ENCODE measurements at regions of chr7 and their contacts with region 1.

Region 1: DNA sequence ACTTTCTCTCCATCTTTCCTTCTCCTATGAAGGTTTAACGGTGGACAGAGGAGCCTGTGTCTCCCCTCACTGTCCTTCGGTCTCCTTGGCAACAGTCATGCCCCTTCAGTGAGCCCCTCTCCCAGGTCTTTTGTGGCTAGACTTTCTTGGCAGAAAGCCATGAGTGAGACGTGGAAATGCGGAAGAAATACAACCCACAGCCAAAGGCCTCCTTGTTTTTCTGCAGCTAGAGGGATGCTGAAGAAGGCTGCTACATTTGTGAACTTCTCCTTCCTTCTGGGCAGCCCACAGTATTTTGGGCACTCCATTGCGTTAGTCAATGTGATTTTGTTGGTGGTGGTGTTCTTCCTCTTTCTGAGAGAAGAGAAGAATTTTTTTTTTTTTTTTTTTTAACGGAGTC is 333.7 kb upstream of the PODXL start:
- DNase-seq: no peak
- H3K27ac ChIP-seq: no peak overlapping the region
- CTCF ChIP-seq: no peak

Region 2: DNA sequence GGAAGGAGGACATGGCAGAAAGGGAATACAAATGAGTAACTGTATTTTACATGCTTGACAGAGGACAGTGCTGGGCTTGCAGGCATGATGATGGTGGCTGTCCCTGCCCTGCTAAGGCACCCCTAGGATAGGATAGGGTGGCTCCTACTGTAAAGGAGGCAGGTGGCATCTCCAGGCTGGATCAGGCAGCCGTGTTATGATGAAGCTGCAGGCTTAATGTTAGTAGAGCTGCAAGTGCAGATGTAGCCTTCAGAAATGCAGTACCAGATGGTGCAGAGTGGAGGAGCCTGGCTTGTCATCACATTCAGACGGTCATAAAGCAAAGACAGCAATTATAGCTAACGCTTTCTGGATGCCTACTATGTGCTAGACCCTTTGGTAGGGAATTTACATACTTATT is 45.8 kb before region 1 on chr7:
- CTCF ChIA-PET with region 1: no interaction called
- POLR2A ChIA-PET with region 1: no interaction called
- DNase-seq: no peak
- H3K27ac ChIP-seq: no peak overlapping the region
- CTCF ChIP-seq: no peak

Region 3: DNA sequence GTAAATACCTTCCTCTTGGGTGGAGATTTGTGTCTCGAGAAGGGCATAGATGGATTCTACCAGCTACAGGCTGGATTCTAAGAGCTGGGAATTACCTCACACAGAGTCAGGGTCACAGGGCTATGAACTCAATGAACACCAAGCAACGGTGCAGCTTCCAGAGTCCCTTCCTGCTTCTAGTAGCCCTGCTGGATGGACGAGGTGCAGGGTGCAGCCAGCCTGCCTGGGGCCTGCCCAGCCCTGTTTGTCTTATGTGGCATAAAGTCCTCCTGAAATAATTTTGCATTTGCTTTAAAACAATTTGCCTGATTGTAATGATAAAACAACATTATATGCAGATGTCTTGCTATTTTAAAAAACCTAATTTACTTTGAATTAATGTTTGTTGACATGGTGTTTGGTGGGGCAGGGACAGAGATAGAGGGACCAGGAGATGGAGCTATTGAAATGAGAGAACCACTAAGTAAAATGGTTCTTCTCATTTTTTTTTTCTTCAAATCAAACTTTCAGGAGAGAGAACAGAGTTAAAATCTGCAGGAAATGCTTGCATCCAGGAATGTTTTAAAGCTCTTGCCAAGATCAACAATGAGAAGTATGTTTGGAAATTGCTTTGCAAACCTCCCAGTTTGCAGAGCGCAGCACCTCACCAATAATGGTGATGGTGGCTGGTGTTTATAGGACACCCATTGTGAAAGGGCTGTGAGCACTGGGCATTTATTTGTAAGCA is 28.4 kb before region 1 on chr7:
- CTCF ChIA-PET with region 1: interaction called, 10 read pairs
- POLR2A ChIA-PET with region 1: no interaction called
- DNase-seq: no peak
- H3K27ac ChIP-seq: peak overlapping the region; percentile 47; the same call in 1 of the 2 replicates
- CTCF ChIP-seq: no peak; the same call in 1 of the 2 replicates

Measured in RWPE1 (cell line).